AG04449 (cell line): ENCODE measurements at regions of chr17 and their contacts with region 1.

Region 1: GRCh38 chr17:7897773-7898172 is 9.2 kb downstream of the CHD3 start:
- DNase-seq: no peak
- H3K4me3 ChIP-seq: no peak overlapping the region
- CTCF ChIP-seq: peak; percentile 44

Region 2: GRCh38 chr17:7867881-7868329 is 29.9 kb before region 1 on chr17:
- CTCF ChIA-PET with region 1: interaction called, 125 read pairs
- POLR2A ChIA-PET with region 1: no interaction called
- DNase-seq: no peak
- H3K4me3 ChIP-seq: no peak overlapping the region
- CTCF ChIP-seq: no peak